Psoas muscle (tissue), 8 donors: ENCODE measurements at regions of chr4 and their contacts with region 1.

Region 1: GRCh38 chr4:90118527-90119195 is 8.5 kb upstream of the CCSER1 start:
- DNase-seq: no peak
- ATAC-seq: no peak
- H3K4me3 ChIP-seq: no peak overlapping the region
- H3K27ac ChIP-seq: no peak overlapping the region
- H3K4me1 ChIP-seq: no peaks in the 10 kb centered on the region
- H3K27me3 ChIP-seq: no peaks in the 10 kb centered on the region
- CTCF ChIP-seq: no peak

Region 2: DNA sequence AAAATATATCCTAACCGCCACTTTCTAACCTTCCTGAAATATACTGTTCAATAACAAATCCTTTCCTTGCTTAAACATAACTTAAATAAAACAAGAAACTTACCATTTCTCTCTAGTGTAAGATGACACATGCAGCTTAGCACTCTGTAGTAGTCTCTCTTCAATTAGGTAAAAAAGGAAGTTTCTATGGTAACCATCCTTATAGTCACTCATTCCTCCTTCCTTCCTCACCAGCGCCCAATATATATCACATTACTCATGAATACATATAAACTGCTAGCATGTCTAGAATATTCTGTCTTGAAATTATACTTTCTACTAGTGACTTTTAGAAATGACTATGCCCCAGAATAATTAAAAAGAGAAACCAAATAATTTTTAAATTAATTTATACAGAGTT is 393.9 kb before region 1 on chr4:
- intact Hi-C with region 1: no loop called
- DNase-seq: no peak
- ATAC-seq: no peak
- H3K4me3 ChIP-seq: no peak overlapping the region
- H3K27ac ChIP-seq: no peak overlapping the region
- H3K4me1 ChIP-seq: no peaks in the 10 kb centered on the region
- H3K27me3 ChIP-seq: no peaks in the 10 kb centered on the region
- CTCF ChIP-seq: no peak

Region 3: DNA sequence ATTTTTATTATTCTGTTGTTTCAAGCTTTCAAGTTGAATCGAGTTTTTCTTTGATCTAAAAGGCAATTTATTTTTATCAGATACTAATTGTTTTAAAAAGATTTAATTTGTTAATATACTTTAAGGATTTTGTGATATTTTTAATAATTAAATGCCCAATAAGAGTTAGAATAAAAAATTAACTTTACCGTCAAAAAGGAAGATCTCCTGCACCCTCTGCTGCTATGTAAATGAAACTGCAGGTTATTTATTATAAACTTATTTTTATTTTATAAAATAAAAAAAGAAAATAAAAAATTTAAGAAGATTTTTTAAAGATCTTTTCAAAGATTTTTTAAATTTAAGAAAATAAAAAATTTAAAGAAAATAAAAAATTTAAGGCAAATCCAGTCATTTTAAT is 174.7 kb after region 1 on chr4:
- intact Hi-C with region 1: loop called in 1 of 2 experiments (anchors 10 kb)
- DNase-seq: no peak
- ATAC-seq: no peak
- H3K4me3 ChIP-seq: no peak overlapping the region
- H3K27ac ChIP-seq: no peak overlapping the region
- H3K4me1 ChIP-seq: no peaks in the 10 kb centered on the region
- H3K27me3 ChIP-seq: no peaks in the 10 kb centered on the region
- CTCF ChIP-seq: peak; percentile 51